ENCODE measurements at regions of chr9 and their contacts with region 1.

Region 1: GRCh38 chr9:130327070-130327780 is 61.7 kb downstream of the HMCN2 start:
- DNase-seq: no peak
- H3K4me3 ChIP-seq: peak overlapping the region in 3 of 4 donors; percentile 34 to 50 (median 48)
- H3K27ac ChIP-seq: peak overlapping the region; percentile 88 to 97 (median 94)
- H3K4me1 ChIP-seq: peaks cover 20 to 79% (median 70%) of the 10 kb centered on the region in 4 donors
- H3K27me3 ChIP-seq: no peaks in the 10 kb centered on the region
- CTCF ChIP-seq: peak; percentile 41 to 55 (median 49)
- EP300 ChIP-seq: no peak
- POLR2A ChIP-seq: no peak

Region 2: DNA sequence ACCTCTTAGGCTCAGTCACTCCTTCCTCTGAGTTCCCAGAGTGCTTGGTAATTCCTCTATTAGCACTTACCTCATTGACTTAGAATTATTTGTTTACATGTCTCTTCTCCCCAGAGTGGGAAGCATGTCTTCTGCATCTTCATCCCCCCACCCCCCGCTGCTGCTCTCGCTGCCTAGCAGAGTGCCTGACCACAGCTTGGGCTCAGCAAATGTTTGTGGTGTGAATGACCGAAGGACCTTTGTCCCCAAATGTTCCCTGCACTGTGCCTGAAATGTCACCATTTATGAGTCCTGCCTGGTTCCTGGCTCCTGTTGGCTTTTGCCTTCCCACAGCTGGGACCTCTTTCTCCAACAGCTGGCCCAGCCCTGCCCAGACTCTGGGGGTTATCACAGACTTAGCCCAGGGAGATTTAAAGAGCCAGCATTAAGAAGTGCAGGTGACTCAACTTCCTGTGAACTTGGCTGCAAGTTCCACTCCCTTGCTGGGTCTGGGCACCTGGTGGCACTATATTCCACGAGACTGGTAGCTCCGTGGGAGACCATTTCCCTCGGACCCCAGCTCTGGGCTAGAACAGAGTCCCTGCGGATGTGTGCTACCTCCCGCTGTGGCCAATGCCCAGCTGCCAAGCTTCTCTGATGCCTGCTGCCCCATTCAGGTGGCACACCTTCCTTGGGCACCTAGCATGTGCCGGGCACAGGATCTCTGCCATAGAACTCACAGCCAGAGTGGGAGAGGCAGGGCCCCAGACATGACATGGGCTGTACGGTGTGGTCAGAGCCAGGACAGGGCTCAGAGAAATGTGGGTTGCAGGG is 63.4 kb before region 1 on chr9:
- intact Hi-C with region 1: loop called (anchors 5 kb)
- DNase-seq: no peak
- H3K4me3 ChIP-seq: no peak overlapping the region
- H3K27ac ChIP-seq: peak overlapping the region in 2 of 4 donors; percentile 78 to 87
- H3K4me1 ChIP-seq: peaks cover 10 to 75% (median 67%) of the 10 kb centered on the region in 4 donors
- H3K27me3 ChIP-seq: peaks cover 0 to 15% (median 0%) of the 10 kb centered on the region in 4 donors
- CTCF ChIP-seq: peak; percentile 14 to 45 (median 24)
- EP300 ChIP-seq: no peak
- POLR2A ChIP-seq: no peak

Region 3: GRCh38 chr9:130283539-130284248 is 43.5 kb before region 1 on chr9:
- intact Hi-C with region 1: loop called (anchors 5 kb)
- DNase-seq: no peak
- H3K4me3 ChIP-seq: no peak overlapping the region
- H3K27ac ChIP-seq: peak overlapping the region in 3 of 4 donors; percentile 25 to 89 (median 84)
- H3K4me1 ChIP-seq: peaks cover 26 to 74% (median 59%) of the 10 kb centered on the region in 4 donors
- H3K27me3 ChIP-seq: no peaks in the 10 kb centered on the region
- CTCF ChIP-seq: no peak
- EP300 ChIP-seq: no peak
- POLR2A ChIP-seq: no peak

Measured in esophagus muscularis mucosa (tissue), 4 donors.